PC-3 (cell line): ENCODE measurements at regions of chr16 and their contacts with region 1.

Region 1: DNA sequence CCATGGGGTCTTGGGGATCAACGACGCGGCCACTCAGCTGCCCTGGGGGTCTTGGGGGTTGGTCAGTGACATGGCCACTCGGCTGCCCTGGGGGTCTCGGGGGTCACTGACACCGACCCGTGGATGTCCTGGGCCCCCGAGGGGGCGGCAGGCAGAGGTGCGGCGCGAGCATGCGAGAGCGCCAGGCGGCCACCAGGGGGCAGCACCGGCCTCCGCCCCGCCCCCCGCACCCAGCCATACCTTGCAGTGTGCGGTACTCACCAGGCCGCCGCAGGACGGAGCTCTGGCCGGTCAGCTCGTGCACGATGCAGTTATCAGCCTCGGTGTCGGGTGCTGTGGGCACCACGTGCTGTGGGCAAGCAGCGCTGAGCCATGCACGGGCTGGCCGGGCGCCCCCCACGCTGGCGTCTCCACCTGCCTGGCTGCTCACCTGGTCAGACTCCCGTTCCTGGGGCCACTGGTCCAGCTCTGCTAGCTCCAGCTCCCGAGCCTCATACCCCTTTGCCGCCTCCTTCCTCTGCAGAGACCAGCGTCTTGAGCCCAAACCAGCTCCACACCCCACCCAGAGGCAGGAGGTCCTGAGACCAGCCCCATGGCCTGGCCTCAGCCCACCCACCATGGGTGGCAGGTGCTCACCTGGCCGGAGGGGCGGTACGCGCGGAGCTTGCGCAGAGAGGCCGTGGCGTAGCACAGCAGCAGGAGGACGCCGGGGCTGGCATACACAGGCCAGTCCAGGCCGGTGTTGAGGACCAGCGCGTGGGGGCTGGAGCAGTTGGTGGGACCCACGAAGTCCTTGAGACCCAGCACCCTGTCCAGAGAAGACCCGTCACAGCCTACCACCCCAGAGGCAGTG is 31.2 kb downstream of the CTU2 start:
- DNase-seq: peak; percentile 68
- ATAC-seq: peak; percentile 86
- H3K4me3 ChIP-seq: no peak overlapping the region
- H3K27ac ChIP-seq: no peak overlapping the region
- H3K4me1 ChIP-seq: no peaks in the 10 kb centered on the region
- H3K27me3 ChIP-seq: no peaks in the 10 kb centered on the region
- CTCF ChIP-seq: peak; percentile 88

Region 2: GRCh38 chr16:88785106-88785924 is 47.8 kb after region 1 on chr16 and contains the start of gene PIEZO1:
- CTCF ChIA-PET with region 1: interaction called, 21 read pairs
- POLR2A ChIA-PET with region 1: interaction called, 4 read pairs
- intact Hi-C with region 1: loop called (anchors 2 kb)
- DNase-seq: peak; percentile 53
- ATAC-seq: peak; percentile 38
- H3K4me3 ChIP-seq: peak within 1 kb of the TSS; percentile 76
- H3K27ac ChIP-seq: peak within 1 kb of the TSS; percentile 53
- H3K4me1 ChIP-seq: peaks cover 30% of the 10 kb centered on the region
- H3K27me3 ChIP-seq: no peaks in the 10 kb centered on the region
- CTCF ChIP-seq: peak; percentile 70
- total RNA-seq, gene PIEZO1: 180 and 251 TPM in 2 replicates